ENCODE measurements at regions of chr14 and their contacts with region 1.

Region 1: GRCh38 chr14:77314043-77314442 is 6.6 kb downstream of the POMT2 start:
- DNase-seq: no peak
- ATAC-seq: no peak
- H3K4me3 ChIP-seq: no peak overlapping the region
- H3K27ac ChIP-seq: no peak overlapping the region
- H3K4me1 ChIP-seq: peaks cover 0 to 15% of the 10 kb centered on the region in 2 donors
- H3K27me3 ChIP-seq: no peaks in the 10 kb centered on the region
- CTCF ChIP-seq: no peak

Region 2: GRCh38 chr14:77151918-77152588 is 162.0 kb before region 1 on chr14:
- intact Hi-C with region 1: loop called in 1 of 2 experiments (anchors 10 kb)
- DNase-seq: no peak
- ATAC-seq: peak; percentile 79
- H3K4me3 ChIP-seq: no peak overlapping the region
- H3K27ac ChIP-seq: no peak overlapping the region
- H3K4me1 ChIP-seq: no peaks in the 10 kb centered on the region
- H3K27me3 ChIP-seq: peaks cover 7 to 73% of the 10 kb centered on the region in 2 donors
- CTCF ChIP-seq: no peak

Measured in left lung (tissue), 14 donors.